Activated naive CD4-positive, alpha-beta T cell treated with anti-CD3 and anti-CD28 coated beads for 36 hours (primary cell): ENCODE measurements at regions of chr18 and their contacts with region 1.

Region 1: DNA sequence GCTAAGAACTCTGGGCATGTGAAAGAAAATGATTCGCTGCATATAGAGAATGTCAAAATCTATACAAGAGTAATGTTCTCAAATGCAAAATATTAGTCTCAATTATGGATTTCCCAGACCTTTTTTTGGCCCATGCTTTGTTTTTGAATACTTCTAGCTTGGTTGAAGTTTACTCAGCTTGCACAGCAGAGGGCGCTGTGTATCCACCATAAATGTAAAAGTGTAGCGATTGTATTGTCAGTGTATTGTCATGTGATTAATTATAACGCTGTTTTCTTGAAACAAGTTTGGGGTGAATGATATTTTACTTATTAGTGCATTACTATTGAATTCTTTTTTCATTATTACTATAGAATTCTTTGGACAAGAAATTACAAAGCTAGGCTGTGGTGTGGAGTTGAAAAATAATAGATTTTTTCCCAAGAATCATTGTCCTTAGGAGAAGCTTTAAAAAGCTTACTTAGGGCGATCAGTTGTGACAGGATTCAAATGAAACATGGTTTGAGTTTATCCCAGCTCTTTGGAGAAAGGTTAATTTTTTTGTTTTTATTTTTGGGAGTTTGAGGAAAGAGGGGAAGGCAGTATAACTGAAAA is 98.3 kb downstream of the PIK3C3 start:
- DNase-seq: peak; percentile 79
- H3K4me3 Mint-ChIP-seq: no peak overlapping the region
- H3K27ac Mint-ChIP-seq: no peak overlapping the region
- H3K4me1 Mint-ChIP-seq: peaks cover 8% of the 10 kb centered on the region
- H3K27me3 Mint-ChIP-seq: no peaks in the 10 kb centered on the region

Region 2: GRCh38 chr18:42041793-42042192 is 11.5 kb before region 1 on chr18:
- CTCF ChIA-PET with region 1: interaction called, 12 read pairs
- intact Hi-C with region 1: no loop called
- DNase-seq: no peak
- H3K4me3 Mint-ChIP-seq: no peak overlapping the region
- H3K27ac Mint-ChIP-seq: no peak overlapping the region
- H3K4me1 Mint-ChIP-seq: peaks cover 4% of the 10 kb centered on the region
- H3K27me3 Mint-ChIP-seq: no peaks in the 10 kb centered on the region

Region 3: GRCh38 chr18:42074704-42075103 is 21.4 kb after region 1 on chr18:
- CTCF ChIA-PET with region 1: interaction called, 18 read pairs
- intact Hi-C with region 1: no loop called
- DNase-seq: no peak
- H3K4me3 Mint-ChIP-seq: no peak overlapping the region
- H3K27ac Mint-ChIP-seq: no peak overlapping the region
- H3K4me1 Mint-ChIP-seq: peaks cover 2% of the 10 kb centered on the region
- H3K27me3 Mint-ChIP-seq: no peaks in the 10 kb centered on the region

Region 4: GRCh38 chr18:42274488-42275137 is 221.3 kb after region 1 on chr18:
- CTCF ChIA-PET with region 1: no interaction called
- intact Hi-C with region 1: loop called (anchors 2 kb)
- DNase-seq: no peak
- H3K4me3 Mint-ChIP-seq: no peak overlapping the region
- H3K27ac Mint-ChIP-seq: no peak overlapping the region
- H3K4me1 Mint-ChIP-seq: no peaks in the 10 kb centered on the region
- H3K27me3 Mint-ChIP-seq: no peaks in the 10 kb centered on the region

Region 5: GRCh38 chr18:42373584-42373983 is 320.3 kb after region 1 on chr18:
- CTCF ChIA-PET with region 1: no interaction called
- intact Hi-C with region 1: no loop called
- DNase-seq: no peak
- H3K4me3 Mint-ChIP-seq: no peak overlapping the region
- H3K27ac Mint-ChIP-seq: no peak overlapping the region
- H3K4me1 Mint-ChIP-seq: no peaks in the 10 kb centered on the region
- H3K27me3 Mint-ChIP-seq: no peaks in the 10 kb centered on the region

Region 6: GRCh38 chr18:42675810-42676209 is 622.5 kb after region 1 on chr18:
- CTCF ChIA-PET with region 1: no interaction called
- intact Hi-C with region 1: no loop called
- DNase-seq: no peak
- H3K4me3 Mint-ChIP-seq: no peak overlapping the region
- H3K27ac Mint-ChIP-seq: no peak overlapping the region
- H3K4me1 Mint-ChIP-seq: no peaks in the 10 kb centered on the region
- H3K27me3 Mint-ChIP-seq: no peaks in the 10 kb centered on the region

Region 7: GRCh38 chr18:43271593-43272432 is 1218.5 kb after region 1 on chr18:
- CTCF ChIA-PET with region 1: interaction called, 8 read pairs
- intact Hi-C with region 1: loop called (anchors 2 kb)
- DNase-seq: peak; percentile 36
- H3K4me3 Mint-ChIP-seq: no peak overlapping the region
- H3K27ac Mint-ChIP-seq: no peak overlapping the region
- H3K4me1 Mint-ChIP-seq: no peaks in the 10 kb centered on the region
- H3K27me3 Mint-ChIP-seq: peaks cover 3% of the 10 kb centered on the region

Region 8: GRCh38 chr18:43563780-43564179 is 1510.5 kb after region 1 on chr18:
- CTCF ChIA-PET with region 1: no interaction called
- intact Hi-C with region 1: loop called (anchors 10 kb)
- DNase-seq: no peak
- H3K4me3 Mint-ChIP-seq: no peak overlapping the region
- H3K27ac Mint-ChIP-seq: no peak overlapping the region
- H3K4me1 Mint-ChIP-seq: no peaks in the 10 kb centered on the region
- H3K27me3 Mint-ChIP-seq: no peaks in the 10 kb centered on the region